Mucosa of descending colon (tissue), 3 donors: ENCODE measurements at regions of chr5 and their contacts with region 1.

Region 1: DNA sequence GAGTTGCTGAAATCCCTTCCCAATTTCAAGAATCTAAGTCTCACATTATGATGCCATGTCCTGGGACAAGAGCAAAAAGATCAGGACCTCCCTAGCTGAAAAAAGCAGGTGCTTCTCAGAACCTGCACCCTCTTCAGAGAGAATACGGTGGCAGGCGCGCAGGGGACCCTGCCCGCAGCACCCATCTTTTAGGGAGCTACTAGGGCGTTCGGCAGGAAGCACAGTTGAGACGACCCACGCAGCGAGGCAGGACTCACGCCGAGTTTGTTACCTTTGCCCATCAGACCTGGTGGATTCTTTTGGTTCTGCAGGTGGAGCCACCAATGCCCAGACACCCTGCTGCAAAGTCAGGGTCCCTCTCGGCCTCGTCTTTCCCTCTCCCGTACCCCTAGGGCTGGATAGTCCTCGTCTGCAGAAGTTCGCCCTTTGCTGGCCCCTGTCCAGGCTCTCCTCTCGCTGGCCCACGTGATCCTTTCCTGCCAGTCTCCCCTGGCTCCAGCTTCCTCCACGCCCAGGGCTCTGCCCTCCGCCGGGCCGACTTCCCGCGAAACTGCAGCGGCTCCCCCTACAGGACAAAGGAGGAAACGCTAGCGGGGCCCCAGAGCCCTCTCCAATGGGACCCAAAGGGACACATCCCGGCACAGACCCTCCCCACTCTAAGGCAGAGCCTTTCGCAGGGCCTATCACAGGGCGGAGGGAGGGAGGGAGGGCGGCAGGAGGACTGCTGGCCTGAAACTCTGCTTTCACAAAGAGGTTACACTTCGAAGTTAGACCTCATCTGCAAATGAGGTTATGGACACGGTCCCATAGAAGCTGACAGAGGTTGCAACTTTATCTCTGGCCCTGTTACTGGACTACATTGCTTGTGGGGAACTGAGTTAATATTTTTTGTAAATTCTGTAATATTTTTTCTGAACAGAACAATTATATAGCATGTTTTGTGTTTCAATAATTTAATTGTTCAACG is 28.8 kb downstream of the TMEM174 start:
- DNase-seq: peak; percentile 93 to 96 (median 95)
- ATAC-seq: peak; percentile 90
- H3K4me3 ChIP-seq: no peak overlapping the region
- H3K4me1 ChIP-seq: peaks cover 17% of the 10 kb centered on the region
- CTCF ChIP-seq: peak; percentile 81

Region 2: DNA sequence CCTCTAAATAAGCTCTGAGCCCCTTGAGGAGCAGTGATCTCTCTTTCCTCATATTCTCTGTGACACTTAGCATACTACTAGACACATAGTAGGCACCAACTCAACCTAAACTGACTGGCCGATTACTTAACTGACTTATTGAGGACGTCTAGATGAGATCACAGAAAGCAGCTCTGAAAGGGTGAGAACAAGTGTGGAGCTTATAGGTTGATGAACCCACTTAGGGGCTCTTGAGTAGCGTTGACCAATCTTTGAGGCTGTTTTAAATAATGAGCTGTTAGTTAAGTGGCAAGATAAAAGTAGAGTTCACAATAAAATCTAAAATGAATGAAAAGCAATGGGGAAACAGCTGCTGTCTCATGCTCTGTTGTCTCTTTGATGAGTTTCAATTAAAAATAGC is 510.1 kb before region 1 on chr5:
- intact Hi-C with region 1: no loop called
- DNase-seq: no peak
- ATAC-seq: no peak
- H3K4me3 ChIP-seq: no peak overlapping the region
- H3K4me1 ChIP-seq: no peaks in the 10 kb centered on the region
- CTCF ChIP-seq: no peak

Region 3: GRCh38 chr5:73088026-73088425 is 113.8 kb before region 1 on chr5:
- intact Hi-C with region 1: loop called in 1 of 2 experiments (anchors 10 kb)
- DNase-seq: no peak
- ATAC-seq: no peak
- H3K4me3 ChIP-seq: no peak overlapping the region
- H3K4me1 ChIP-seq: no peaks in the 10 kb centered on the region
- CTCF ChIP-seq: no peak

Region 4: DNA sequence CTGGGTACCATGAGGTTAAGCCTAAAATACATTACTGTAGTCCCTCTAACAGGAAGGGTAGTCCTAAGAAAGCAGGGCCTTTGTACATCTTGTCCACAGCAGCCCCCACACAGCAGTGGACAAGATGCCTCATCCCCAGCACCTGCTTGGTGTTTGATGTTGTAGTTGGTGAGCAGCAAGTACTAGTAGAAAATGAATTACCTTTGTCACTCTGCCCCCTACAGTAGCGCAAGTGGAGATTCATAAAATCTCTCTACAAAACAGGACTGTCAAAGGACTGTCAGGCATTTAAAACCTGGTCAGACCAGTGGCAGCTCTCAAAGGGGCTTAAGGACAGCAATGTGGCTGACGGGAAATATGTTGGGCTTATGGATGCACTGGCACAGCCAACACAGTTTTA is 93.6 kb after region 1 on chr5:
- intact Hi-C with region 1: no loop called
- DNase-seq: no peak
- ATAC-seq: peak; percentile 36
- H3K4me3 ChIP-seq: no peak overlapping the region
- H3K4me1 ChIP-seq: peaks cover 7% of the 10 kb centered on the region
- CTCF ChIP-seq: no peak